Activated CD4-positive, alpha-beta T cell treated with anti-CD3 and anti-CD28 coated beads for 36 hours (primary cell): ENCODE measurements at regions of chr3 and their contacts with region 1.

Region 1: DNA sequence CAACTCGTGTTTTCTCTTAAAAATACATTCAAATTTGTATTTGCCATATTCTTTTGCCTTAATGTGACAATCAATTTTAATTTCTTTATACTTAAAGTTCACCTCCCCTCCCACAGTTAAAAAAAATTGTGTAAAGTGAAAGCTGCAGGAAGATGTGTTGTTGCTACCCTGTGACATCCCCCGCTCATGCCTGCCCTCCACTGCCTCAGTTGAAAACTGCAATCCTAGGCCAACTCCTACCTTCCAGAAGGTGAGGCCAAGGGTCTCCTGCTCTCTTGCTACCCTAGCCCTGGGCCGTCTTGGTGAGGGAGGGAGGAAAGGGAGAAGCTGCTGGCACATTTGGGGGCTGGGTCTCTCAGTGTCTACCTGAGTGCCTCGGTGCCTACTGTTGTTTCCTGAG is 57.0 kb upstream of the CMTM7 start:
- DNase-seq: peak; percentile 80
- ATAC-seq: peak; percentile 91
- H3K4me3 Mint-ChIP-seq: no peak overlapping the region
- H3K27ac Mint-ChIP-seq: peak overlapping the region; percentile 48
- H3K4me1 Mint-ChIP-seq: peaks cover 52% of the 10 kb centered on the region
- H3K27me3 Mint-ChIP-seq: no peaks in the 10 kb centered on the region

Region 2: DNA sequence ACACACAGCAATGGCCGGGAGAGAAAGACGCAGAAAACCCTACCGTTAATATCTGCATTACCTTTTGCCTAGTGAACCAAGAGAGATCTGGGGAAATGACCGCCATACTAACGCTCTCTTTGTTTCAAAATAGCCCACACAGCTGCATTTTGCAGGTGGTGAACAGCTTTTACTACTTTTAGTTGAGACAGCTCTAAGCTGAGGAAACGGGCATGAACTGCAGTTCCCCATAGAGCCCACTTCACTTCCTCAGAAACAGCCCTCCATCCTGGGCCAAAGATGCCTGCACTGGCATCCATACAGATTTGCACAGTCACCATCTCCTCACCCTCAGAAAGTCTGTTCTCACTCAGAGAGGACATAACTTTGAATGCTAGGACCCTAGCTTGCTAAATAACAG is 308.1 kb before region 1 on chr3:
- CTCF ChIA-PET with region 1: no interaction called
- POLR2A ChIA-PET with region 1: no interaction called
- intact Hi-C with region 1: loop called in 1 of 2 experiments (anchors 10 kb)
- DNase-seq: no peak
- ATAC-seq: no peak
- H3K4me3 Mint-ChIP-seq: no peak overlapping the region
- H3K27ac Mint-ChIP-seq: no peak overlapping the region
- H3K4me1 Mint-ChIP-seq: no peaks in the 10 kb centered on the region
- H3K27me3 Mint-ChIP-seq: peaks cover 9% of the 10 kb centered on the region

Region 3: DNA sequence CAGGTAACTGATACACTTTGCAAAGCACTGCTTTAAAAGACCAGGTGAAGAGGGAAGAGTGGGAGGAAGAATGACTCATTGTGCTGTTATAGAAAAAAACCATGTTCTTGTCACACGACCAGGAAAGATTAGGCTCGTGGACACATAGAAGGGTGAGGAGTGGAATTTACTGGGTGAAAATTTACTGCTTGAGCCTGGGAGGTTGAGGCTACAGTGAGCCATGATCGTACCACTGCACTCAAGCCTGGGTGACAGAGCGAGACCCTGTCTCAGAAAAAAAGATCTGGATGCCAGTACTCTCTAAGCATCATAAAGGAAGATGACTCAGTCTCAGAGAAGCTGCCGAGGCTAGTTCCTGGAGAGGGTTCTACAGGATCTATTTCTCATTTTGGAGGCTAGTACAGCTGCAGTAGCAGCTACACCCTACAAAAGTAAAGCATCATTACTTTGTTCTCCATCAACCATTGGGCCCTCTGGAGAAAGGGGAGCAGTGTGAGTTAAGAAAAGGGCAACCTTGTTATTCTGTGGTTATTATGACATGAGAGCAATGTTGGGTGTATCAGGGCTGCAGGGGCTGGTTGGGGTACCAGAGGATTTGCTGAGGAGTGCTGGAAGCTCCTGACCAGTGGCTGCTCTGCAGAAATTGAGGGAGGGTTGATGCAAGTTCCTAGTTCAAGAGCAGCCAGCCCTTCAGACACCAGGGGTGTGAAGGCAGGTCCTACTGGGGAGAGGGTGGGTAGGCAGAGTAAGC is 20.8 kb before region 1 on chr3:
- CTCF ChIA-PET with region 1: interaction called, 4 read pairs
- POLR2A ChIA-PET with region 1: interaction called, 3 read pairs
- intact Hi-C with region 1: loop called in 1 of 2 experiments (anchors 1 kb)
- DNase-seq: peak; percentile 54
- ATAC-seq: peak; percentile 97
- H3K4me3 Mint-ChIP-seq: peak overlapping the region; percentile 62
- H3K27ac Mint-ChIP-seq: peak overlapping the region; percentile 70
- H3K4me1 Mint-ChIP-seq: peaks cover 24% of the 10 kb centered on the region
- H3K27me3 Mint-ChIP-seq: no peaks in the 10 kb centered on the region

Region 4: DNA sequence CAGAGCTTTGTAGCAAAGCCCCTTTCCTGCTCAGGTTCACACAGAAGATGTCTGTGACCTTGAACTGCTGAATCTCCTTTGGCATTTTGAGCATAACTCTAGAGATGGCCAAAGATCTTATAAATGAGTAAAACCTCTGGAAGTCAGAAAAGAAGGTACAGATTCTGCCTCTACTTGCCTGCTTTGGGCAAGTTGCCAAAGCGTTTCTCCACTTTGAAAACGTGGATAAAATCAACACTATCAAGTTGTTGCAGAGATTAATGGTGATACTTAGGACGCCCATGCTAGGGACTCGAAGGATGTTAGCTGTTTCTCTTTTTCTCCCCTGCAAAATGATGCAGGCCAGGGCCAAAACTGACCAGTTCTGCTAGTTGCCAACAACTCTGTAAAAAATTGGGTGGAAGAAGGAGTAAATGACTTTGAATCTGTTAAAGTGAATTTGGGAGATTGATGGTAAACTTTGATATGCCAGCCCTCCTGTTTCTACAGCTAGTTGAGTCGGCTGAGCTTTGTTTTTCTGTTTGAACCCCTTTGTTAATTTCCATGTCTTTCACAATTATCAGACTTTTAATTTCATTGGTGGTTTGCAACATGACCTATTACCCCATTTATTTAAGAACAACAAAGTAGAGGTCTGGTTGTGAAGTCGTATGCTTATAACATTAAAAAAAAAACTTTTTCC is 10.9 kb before region 1 on chr3:
- CTCF ChIA-PET with region 1: interaction called, 11 read pairs
- POLR2A ChIA-PET with region 1: no interaction called
- intact Hi-C with region 1: no loop called
- DNase-seq: no peak
- ATAC-seq: no peak
- H3K4me3 Mint-ChIP-seq: no peak overlapping the region
- H3K27ac Mint-ChIP-seq: no peak overlapping the region
- H3K4me1 Mint-ChIP-seq: peaks cover 9% of the 10 kb centered on the region
- H3K27me3 Mint-ChIP-seq: no peaks in the 10 kb centered on the region